Activated CD4-positive, alpha-beta memory T cell treated with anti-CD3 and anti-CD28 coated beads for 36 hours (primary cell): ENCODE measurements at regions of chr13 and their contacts with region 1.

Region 1: GRCh38 chr13:20828539-20829364 is 55.0 kb upstream of the EEF1AKMT1 start:
- DNase-seq: peak; percentile 13
- H3K4me3 Mint-ChIP-seq: no peak overlapping the region
- H3K27ac Mint-ChIP-seq: peak overlapping the region; percentile 5
- H3K4me1 Mint-ChIP-seq: peaks cover 11% of the 10 kb centered on the region
- H3K27me3 Mint-ChIP-seq: no peaks in the 10 kb centered on the region

Region 2: DNA sequence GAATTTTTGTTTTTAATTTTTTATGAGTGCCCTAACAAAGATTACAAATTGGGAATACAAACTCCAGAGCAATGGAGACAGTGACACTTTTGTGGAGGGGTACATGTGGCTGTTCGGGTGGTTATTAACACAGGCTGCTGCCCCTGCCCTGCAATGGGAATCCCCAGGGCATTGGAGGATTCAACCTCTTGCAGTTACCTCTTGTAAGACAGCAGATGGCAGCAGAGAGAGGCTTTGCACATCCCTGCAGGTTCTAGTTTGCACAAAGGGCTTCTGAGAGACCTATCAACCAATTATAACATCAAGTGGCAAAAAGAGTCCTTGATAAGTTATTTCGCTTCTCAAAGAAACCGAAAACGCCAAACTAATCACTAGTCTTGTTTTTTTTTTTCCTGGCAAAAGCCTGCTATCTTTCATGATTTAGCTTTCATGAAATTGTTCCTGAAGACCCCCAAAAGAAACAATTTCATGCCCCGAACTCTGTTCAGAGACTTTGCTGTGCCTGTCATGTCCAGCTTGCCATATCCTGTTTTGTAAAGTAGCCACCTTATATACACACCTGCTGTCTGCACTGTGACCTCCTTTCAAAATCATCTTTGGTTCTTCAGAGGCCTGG is 646.4 kb before region 1 on chr13:
- CTCF ChIA-PET with region 1: interaction called, 6 read pairs
- POLR2A ChIA-PET with region 1: no interaction called
- intact Hi-C with region 1: loop called (anchors 2 kb)
- DNase-seq: peak; percentile 59
- H3K4me3 Mint-ChIP-seq: no peak overlapping the region
- H3K27ac Mint-ChIP-seq: no peak overlapping the region
- H3K4me1 Mint-ChIP-seq: no peaks in the 10 kb centered on the region
- H3K27me3 Mint-ChIP-seq: peaks cover 37% of the 10 kb centered on the region

Region 3: DNA sequence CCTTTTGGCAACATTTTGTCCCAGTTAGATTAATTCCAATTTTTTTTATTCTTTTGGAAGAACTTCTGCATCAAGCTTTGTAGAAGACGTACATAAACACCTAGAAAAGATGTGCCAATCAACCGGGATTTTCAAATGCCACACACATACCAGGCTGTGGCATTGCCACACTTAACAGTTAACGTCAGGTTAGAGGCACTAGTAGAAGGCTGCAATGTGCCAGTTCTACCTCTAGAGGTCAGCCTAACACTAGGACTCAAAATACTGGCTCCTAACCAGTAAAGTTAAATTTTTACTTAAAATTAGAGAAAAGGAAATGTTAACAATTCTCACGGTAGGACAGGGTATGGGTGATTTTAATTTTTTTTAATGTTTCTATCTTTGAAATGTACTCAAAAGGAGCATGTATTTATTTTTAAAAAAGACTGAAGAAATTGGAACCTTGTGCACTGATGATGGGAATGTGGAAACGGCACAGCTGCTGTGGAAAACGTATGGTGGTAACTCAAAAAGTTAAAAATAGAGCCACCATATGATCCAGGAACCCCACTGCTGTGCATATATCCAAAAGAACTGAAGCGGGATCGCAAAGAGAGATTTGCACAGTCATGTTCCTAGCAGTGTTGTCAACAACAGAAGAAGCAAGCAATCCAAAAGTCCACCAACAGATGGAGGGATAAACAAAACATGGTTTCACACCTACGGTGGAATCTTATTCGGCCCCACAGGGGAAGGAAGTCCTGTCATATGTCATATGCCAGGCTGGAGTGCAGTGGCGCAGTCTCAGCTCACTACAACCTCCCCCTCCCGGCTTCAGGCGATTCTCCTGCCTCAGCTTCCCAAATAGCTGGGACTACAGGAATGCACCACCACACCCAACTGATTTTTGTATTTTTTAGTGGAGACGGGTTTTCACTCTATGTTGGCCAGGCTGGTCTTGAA is 333.4 kb before region 1 on chr13:
- CTCF ChIA-PET with region 1: interaction called, 52 read pairs
- POLR2A ChIA-PET with region 1: interaction called, 3 read pairs
- intact Hi-C with region 1: loop called (anchors 1 kb)
- DNase-seq: peak; percentile 66
- H3K4me3 Mint-ChIP-seq: no peak overlapping the region
- H3K27ac Mint-ChIP-seq: no peak overlapping the region
- H3K4me1 Mint-ChIP-seq: no peaks in the 10 kb centered on the region
- H3K27me3 Mint-ChIP-seq: no peaks in the 10 kb centered on the region

Region 4: DNA sequence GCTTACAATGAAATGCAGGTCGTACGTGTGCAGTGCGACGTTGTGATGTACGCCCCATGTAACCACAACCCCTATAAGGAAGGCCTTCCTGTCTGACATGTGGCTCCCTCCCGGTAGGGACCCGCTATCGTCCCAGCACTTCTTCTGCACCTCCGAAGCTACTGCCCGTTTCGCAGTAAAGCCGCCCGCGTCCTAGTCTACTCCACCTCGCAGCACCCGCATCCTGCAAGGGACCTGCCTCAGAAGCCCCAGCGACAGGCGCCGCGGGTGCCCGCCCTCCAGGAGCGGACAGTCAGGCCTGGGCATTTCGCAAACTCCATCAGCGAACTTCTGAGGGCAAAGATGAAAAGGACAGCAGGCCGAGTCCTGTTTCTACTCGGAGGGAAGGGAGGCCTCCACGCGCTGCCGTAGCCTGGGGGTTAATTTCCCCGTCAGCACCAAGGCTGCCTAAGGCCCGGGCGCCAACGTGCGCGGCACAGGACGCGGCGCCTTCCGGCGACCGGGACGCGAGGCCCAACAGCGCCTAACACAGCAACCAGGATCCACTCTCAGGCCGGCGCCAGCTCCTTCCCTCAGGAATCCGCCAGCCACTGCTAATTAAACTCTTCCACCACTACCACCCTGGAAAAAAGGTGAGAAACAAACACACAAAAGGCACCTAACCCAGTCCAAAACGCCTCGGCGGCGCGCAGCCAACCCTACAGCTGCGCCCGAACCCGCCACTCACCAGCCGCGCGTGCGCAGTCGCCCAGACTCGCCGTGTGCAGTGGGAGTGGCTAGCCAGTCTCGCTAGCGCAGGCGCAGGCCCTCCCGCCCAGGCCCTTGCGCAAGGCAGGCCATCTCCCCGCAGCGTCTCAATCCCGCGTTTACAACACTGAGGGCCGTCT is 55.3 kb before region 1 on chr13 and contains the start of gene EEF1AKMT1:
- CTCF ChIA-PET with region 1: interaction called, 4 read pairs
- POLR2A ChIA-PET with region 1: interaction called, 4 read pairs
- intact Hi-C with region 1: loop called (anchors 1 kb)
- DNase-seq: peak; percentile 96
- H3K4me3 Mint-ChIP-seq: peak within 1 kb of the TSS; percentile 81
- H3K27ac Mint-ChIP-seq: peak within 1 kb of the TSS; percentile 96
- H3K4me1 Mint-ChIP-seq: peaks cover 42% of the 10 kb centered on the region
- H3K27me3 Mint-ChIP-seq: no peaks in the 10 kb centered on the region
- total RNA-seq, gene EEF1AKMT1: 16.5 to 18.4 TPM

Region 5: DNA sequence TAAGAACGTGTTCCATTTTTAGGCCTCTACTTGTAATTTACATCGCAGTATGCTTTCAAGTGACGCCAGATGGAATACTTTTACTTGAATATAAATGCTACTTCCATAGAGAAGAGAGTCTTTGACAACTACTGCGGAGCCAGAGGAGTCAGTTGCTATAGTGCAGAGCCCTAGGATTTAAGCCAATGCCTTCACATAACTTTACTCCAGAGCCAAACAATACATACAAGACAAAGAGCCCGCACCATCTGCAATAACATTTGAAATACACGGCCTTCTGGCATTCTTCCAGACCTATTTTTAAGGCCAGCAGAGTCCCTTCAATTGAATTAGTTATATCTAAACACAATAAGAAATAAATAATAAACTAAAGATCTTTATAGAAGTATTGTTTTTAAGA is 14.4 kb after region 1 on chr13:
- CTCF ChIA-PET with region 1: interaction called, 16 read pairs
- POLR2A ChIA-PET with region 1: no interaction called
- intact Hi-C with region 1: no loop called
- DNase-seq: no peak
- H3K4me3 Mint-ChIP-seq: no peak overlapping the region
- H3K27ac Mint-ChIP-seq: no peak overlapping the region
- H3K4me1 Mint-ChIP-seq: no peaks in the 10 kb centered on the region
- H3K27me3 Mint-ChIP-seq: no peaks in the 10 kb centered on the region

Region 6: DNA sequence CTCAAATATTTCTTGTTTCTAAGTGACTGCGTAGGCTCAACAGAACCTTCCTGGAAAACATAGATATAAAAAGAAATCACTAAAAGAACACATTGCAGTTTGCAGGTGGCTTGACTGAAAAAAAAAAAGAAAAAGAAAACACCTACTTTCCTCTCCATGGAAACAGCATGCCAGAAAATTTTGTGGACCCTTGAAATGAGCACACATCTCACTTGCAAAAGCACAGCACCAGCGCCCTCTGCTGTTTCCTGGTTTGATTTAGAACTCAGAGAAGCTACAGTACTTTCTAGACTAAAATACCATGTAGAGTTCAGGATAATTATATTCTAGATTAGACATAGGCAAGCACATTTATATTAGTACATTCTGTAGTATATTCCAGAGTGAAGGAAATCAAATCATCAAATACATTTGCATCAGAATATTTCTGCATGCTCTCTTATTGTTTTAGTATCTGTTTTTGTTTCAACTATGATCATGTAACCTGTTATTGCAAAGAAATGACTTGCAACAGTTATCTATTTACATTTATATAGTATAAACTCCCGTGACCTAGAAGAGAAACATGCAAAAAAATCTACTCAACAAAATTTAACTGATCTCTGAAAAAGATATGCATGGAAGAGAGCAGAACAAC is 96.1 kb after region 1 on chr13:
- CTCF ChIA-PET with region 1: interaction called, 19 read pairs
- POLR2A ChIA-PET with region 1: no interaction called
- intact Hi-C with region 1: loop called (anchors 1 kb)
- DNase-seq: peak; percentile 77
- H3K4me3 Mint-ChIP-seq: no peak overlapping the region
- H3K27ac Mint-ChIP-seq: no peak overlapping the region
- H3K4me1 Mint-ChIP-seq: no peaks in the 10 kb centered on the region
- H3K27me3 Mint-ChIP-seq: no peaks in the 10 kb centered on the region

Region 7: DNA sequence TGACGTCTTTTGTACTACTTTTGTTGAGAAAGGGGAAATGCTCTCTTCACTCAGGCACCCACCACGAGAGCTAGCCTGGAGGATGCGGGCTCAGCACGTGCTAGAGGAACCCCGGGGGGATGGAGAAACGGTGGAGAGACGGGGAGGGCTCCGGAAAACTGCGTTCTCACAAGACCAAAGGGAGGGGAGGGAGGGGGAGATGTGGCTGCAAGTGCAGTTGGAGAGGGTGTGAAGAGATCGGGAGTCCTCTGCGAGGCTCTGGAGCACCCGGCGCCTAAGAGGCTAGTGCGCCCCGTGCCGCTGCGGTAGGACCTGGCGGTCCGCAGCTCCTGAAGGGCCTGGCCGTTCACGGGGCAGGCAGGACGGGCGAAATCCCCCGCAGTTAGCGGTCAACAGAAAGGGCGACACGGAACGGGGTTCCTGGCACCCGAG is 117.2 kb after region 1 on chr13:
- CTCF ChIA-PET with region 1: no interaction called
- POLR2A ChIA-PET with region 1: no interaction called
- intact Hi-C with region 1: no loop called
- DNase-seq: peak; percentile 12
- H3K4me3 Mint-ChIP-seq: no peak overlapping the region
- H3K27ac Mint-ChIP-seq: no peak overlapping the region
- H3K4me1 Mint-ChIP-seq: peaks cover 5% of the 10 kb centered on the region
- H3K27me3 Mint-ChIP-seq: peaks cover 39% of the 10 kb centered on the region